ENCODE measurements at regions of chr11 and their contacts with region 1.

Region 1: DNA sequence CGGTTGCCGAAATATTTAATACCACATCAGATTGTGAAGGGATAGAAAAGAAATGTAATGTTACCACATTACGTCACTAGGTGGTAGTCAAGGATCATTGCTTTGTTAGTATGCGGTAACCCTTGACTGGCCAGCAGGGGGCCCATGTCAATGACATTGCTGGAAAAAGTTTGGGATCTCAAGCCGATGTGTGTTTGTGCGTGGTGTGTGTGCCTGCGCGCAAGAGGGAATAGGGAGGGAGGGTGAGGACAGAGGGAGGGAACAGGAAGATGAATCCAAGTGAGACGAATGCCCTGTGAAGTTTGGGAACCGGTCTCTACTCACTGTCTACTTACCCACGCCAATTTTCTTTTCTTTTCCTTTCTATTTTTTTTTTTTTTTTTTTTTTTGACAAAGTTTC is 10.7 kb upstream of the MRGPRX2 start:
- DNase-seq: peak; percentile 79
- CTCF ChIP-seq: peak; percentile 93

Region 2: DNA sequence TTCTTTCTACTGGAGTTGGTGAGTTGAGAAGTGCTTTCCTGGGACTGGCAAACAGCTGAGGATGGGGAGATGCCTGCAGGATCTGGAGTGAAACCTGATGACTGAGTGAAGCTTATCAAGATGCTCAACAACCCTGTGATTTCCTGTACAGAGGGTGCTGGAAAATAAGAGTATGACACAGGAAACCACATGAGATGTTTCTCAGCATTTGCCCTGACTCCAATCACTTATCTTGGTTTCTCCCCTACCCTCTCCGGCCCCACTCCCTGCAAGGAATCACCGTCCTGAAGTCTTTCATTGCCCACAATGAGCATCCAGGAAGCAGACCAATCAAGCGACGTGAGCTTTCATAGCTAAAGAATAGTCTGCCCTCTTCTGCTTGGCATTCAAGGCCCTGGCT is 10.6 kb before region 1 on chr11 and contains the start of gene MRGPRX2:
- CTCF ChIA-PET with region 1: interaction called, 90 read pairs
- POLR2A ChIA-PET with region 1: no interaction called
- DNase-seq: no peak
- CTCF ChIP-seq: no peak

Region 3: DNA sequence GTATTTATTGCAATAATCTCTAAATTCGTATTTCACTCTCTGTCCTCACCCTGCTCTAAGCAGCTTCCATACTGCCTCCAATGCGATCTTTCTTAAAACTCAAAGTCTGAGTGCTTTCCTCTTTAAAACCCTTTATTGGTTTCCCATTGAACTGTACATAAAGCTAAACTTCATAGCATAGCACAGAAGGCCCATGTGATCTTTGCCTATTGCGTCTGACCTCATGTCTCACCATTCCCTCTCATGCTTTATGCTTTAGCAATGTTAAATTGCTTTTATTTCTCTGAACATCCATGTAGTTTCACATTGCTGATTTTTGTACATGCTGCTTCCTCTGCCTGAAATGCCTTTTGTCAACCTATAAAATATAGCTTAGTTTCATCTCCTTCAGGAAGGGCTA is 74.1 kb after region 1 on chr11:
- CTCF ChIA-PET with region 1: no interaction called
- POLR2A ChIA-PET with region 1: no interaction called
- DNase-seq: no peak
- CTCF ChIP-seq: no peak

Region 4: GRCh38 chr11:19561011-19561410 is 489.8 kb after region 1 on chr11:
- CTCF ChIA-PET with region 1: interaction called, 42 read pairs
- POLR2A ChIA-PET with region 1: no interaction called
- DNase-seq: no peak
- CTCF ChIP-seq: no peak

Measured in GM10248 (cell line).